Activated CD4-positive, alpha-beta T cell treated with anti-CD3 and anti-CD28 coated beads, Interleukin-2, amount 10 ng/mL, durations not matched to agents 24 days and 14 days (primary cell): ENCODE measurements at regions of chr14 and their contacts with region 1.

Region 1: GRCh38 chr14:77320238-77320935 is at the start of gene POMT2:
- DNase-seq: peak; percentile 98
- H3K4me3 Mint-ChIP-seq: peak within 1 kb of the TSS; percentile 96
- H3K27ac Mint-ChIP-seq: peak within 1 kb of the TSS; percentile 99
- H3K4me1 Mint-ChIP-seq: peaks cover 14% of the 10 kb centered on the region
- H3K27me3 Mint-ChIP-seq: no peaks in the 10 kb centered on the region
- total RNA-seq, gene POMT2: 23.5 and 24.3 TPM in 2 replicates

Region 2: DNA sequence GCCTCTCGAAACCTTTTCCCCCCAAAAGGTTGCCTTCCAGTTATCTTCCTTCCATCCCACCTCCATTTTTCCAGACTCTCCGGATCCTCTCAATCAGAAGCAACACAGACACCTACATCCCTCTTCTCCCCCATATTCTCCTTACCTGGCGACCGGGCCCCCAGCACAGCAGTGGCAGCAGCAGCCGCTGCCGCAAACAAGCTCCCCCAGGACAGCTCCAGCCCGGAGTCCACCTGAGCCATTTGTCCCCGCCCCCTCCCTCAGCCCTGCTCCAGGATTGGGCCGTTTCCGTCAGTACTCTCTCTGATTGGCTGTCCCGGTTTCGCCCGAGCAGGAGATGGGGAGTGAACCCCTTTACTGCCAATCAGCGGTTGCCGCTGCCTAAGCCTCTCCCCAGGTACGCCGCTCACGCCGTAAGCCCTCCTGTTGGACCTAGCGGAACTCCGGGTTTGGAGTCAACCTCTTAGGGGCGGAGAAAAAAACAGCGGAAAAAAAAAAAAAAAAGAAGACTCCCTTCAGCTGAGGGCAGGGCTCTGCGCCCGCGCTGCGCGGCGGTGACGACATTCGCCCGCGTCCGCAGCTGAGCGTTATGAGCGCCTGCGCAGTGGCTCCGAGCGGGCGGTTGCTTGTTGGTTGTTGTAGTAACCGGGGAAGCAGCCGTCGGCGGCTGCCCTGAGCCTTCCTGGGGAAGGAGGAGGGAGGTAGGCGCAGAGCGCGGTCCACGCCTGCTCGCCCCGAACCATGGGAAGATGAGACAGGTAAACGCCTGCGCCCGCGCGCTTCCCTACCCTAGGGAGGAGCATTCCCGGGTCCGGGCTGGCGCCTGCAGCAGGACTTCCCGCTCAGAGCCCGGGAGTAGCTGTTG is 1659.5 kb before region 1 on chr14 and contains the starts of genes ERG28 and TTLL5:
- intact Hi-C with region 1: loop called (anchors 2 kb)
- DNase-seq: peak; percentile 99
- H3K4me3 Mint-ChIP-seq: peak within 1 kb of the TSS; percentile 95
- H3K27ac Mint-ChIP-seq: peak within 1 kb of the TSS; percentile 92
- H3K4me1 Mint-ChIP-seq: peaks cover 21% of the 10 kb centered on the region
- H3K27me3 Mint-ChIP-seq: no peaks in the 10 kb centered on the region
- total RNA-seq, gene ERG28: 20.3 and 20.6 TPM in 2 replicates
- total RNA-seq, gene TTLL5: 31.7 and 35.5 TPM in 2 replicates

Region 3: GRCh38 chr14:77151918-77152588 is 168.3 kb before region 1 on chr14:
- intact Hi-C with region 1: loop called (anchors 1 kb)
- DNase-seq: no peak
- H3K4me3 Mint-ChIP-seq: no peak overlapping the region
- H3K27ac Mint-ChIP-seq: no peak overlapping the region
- H3K4me1 Mint-ChIP-seq: no peaks in the 10 kb centered on the region
- H3K27me3 Mint-ChIP-seq: peaks cover 32% of the 10 kb centered on the region

Region 4: DNA sequence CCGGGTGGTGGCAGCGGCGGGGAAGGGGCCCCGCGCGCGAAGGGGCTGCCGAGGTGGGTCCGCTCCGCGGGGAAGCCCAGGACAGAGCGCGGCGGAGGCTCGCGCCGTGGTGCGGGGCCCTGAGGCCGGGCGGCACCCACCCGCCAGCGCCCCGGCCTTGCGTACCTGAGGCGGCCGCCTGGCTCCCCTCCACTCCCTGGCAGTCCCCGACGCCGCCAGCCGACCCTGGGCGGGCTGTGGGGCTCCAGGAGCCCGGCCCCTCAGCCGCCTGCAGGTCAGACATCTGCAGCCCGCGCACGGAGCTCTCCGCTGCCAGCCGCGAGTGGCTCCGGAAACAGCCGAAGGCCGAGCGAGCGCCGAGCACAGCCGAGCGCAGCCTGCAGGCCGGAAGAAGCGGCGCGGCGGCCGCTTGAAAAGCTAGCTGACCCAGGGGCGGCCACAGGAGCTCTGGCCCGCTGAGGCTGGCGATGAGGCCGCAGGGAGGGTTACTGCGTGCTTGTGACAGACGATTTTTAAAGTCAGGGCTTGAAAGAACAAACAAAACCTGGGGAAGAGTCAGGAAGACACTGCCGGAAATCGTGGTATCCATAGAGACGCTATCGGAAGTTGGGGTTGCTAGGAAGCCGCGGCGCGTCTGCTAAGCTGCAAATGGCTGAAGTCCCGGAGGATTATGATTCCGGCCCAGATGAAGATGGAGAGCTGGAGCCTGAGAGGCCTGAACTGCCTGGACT is 56.5 kb after region 1 on chr14 and contains the starts of genes SAMD15 and TMED8:
- intact Hi-C with region 1: loop called (anchors 1 kb)
- DNase-seq: peak; percentile 95
- H3K4me3 Mint-ChIP-seq: peak within 1 kb of the TSS; percentile 93
- H3K27ac Mint-ChIP-seq: peak within 1 kb of the TSS; percentile 92
- H3K4me1 Mint-ChIP-seq: peaks cover 29% of the 10 kb centered on the region
- H3K27me3 Mint-ChIP-seq: peaks cover 16% of the 10 kb centered on the region
- total RNA-seq, gene SAMD15: 0.28 and 0.63 TPM in 2 replicates
- total RNA-seq, gene TMED8: 31.1 and 32.1 TPM in 2 replicates

Region 5: GRCh38 chr14:77554207-77554606 is 233.8 kb after region 1 on chr14:
- intact Hi-C with region 1: loop called (anchors 5 kb)
- DNase-seq: peak; percentile 72
- H3K4me3 Mint-ChIP-seq: peak overlapping the region; percentile 70
- H3K27ac Mint-ChIP-seq: peak overlapping the region; percentile 84
- H3K4me1 Mint-ChIP-seq: peaks cover 19% of the 10 kb centered on the region
- H3K27me3 Mint-ChIP-seq: no peaks in the 10 kb centered on the region

Region 6: DNA sequence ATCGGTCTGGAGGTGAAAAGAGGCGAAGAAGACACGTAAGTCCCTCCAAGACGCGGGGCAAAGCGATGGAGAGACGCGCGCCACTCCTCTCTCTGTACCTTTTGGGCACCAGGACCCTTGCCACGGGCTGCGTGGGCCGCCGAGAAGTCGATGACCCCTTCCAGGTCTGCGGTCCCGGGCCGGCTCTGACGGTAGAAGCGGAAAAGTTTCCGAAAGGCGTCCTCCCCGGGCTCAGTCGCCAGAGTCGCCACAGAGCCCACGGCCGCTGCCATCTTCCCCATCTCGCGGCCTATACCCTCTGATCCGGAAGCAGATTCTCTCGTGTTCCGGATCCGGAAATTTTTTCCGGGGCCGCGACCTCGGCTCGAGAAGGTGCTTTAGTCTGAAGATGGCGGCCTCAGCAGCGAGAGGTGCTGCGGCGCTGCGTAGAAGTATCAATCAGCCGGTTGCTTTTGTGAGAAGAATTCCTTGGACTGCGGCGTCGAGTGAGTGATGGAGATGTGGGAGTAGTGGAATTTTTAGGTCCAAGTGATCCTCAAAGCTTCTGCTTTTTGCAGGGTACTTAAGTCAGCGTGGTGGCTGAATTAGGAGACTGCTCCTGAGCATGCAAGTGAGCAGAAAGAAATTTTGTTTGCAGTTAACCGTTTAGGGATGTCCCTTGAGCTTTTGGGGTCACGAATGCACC is 387.5 kb after region 1 on chr14 and contains the starts of genes ALKBH1 and SLIRP:
- intact Hi-C with region 1: loop called (anchors 1 kb)
- DNase-seq: peak; percentile 97
- H3K4me3 Mint-ChIP-seq: peak within 1 kb of the TSS; percentile 82
- H3K27ac Mint-ChIP-seq: peak within 1 kb of the TSS; percentile 91
- H3K4me1 Mint-ChIP-seq: peaks cover 29% of the 10 kb centered on the region
- H3K27me3 Mint-ChIP-seq: no peaks in the 10 kb centered on the region
- total RNA-seq, gene ALKBH1: 17.9 and 19.2 TPM in 2 replicates
- total RNA-seq, gene SLIRP: 184 and 190 TPM in 2 replicates

Region 7: DNA sequence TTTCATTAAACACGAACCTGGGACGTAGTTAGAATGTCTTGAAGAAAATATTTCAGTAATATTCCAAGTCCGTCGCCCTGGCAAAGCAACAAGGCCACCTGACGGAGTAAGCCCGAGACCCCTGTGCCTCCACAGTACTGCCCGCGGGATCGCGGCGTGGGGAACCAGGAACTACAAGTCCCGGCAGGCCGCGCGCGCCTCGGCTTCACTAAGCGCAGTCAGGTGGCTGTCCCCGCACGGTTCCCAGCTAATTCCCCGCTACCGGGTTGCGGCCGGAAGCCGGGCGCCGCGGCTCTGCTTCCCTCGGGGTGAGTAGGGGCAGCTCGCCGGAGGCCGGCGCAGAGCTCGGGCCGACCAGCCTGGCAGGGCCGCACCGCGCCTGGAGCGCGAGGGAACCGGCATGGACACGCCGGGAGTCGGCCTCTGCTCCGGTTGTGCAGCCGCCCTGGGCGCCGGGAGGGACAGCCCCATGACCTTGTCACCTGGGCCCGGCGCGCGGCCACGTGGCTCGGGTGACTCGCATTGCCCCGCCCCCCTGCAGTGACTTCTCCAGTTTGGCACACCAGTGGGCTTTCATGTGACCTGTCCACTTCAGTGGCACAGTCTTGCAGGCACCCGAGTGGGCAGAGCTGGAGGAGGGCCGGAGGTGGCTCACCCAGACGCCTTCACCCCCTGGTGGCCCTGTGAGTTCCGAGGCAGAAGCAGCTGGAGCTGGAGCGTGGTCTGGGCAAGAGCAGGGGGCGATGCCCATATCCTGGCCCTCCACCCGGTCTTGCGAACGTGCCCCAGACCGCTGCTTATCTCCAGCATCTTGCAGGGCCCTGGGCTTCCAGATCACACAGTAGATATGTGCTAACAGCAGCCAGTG is 479.7 kb after region 1 on chr14 and contains the start of gene ADCK1:
- intact Hi-C with region 1: loop called (anchors 1 kb)
- DNase-seq: peak; percentile 96
- H3K4me3 Mint-ChIP-seq: peak within 1 kb of the TSS; percentile 88
- H3K27ac Mint-ChIP-seq: peak within 1 kb of the TSS; percentile 88
- H3K4me1 Mint-ChIP-seq: peaks cover 7% of the 10 kb centered on the region
- H3K27me3 Mint-ChIP-seq: no peaks in the 10 kb centered on the region
- total RNA-seq, gene ADCK1: 4.9 and 5.3 TPM in 2 replicates